ENCODE measurements at regions of chr3 and their contacts with region 1.

Region 1: DNA sequence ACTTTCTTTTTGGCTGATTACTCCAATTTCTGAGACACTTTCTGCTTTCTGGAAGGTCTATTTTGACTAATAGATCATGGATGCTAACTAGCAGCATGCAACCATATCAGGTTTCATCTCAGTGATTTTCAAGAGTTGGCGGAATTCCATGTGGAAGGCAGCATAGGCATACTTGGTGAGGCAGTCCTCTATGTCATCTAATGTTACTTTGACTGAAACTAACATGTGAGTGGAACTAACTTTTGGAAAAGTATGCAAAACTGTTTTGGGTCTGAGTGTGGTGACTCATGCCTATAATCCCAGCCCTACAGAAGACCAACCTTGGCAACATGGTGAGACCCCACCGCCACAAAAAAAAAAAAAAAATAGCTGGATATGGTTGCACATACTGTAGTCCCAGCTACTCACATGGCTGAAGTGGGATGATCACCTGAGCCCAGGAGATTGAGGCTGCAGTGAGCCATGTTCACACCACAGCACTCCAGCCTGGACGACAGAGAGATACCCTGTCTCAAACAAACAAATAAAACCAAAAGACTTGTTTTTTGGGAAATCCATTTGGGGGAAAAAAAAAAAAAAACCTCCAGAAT is 1033.7 kb downstream of the ROBO1 start:
- DNase-seq: no peak
- ATAC-seq: no peak
- H3K4me3 ChIP-seq: no peak overlapping the region
- H3K27ac ChIP-seq: no peak overlapping the region
- H3K4me1 ChIP-seq: 0 out of 2 replicates have a peak, but pooled peaks cover under 1% of the 10 kb centered on the region
- H3K27me3 ChIP-seq: no peaks in the 10 kb centered on the region
- CTCF ChIP-seq: no peak
- EP300 ChIP-seq: no peak
- POLR2A ChIP-seq: no peak
- RAD21 ChIP-seq: no peak

Region 2: GRCh38 chr3:78765671-78766485 is 31.7 kb after region 1 on chr3:
- CTCF ChIA-PET with region 1: no interaction called
- POLR2A ChIA-PET with region 1: no interaction called
- in situ Hi-C with region 1: no loop called
- intact Hi-C with region 1: no loop called
- DNase-seq: no peak
- ATAC-seq: no peak
- H3K4me3 ChIP-seq: no peak overlapping the region
- H3K27ac ChIP-seq: no peak overlapping the region
- H3K4me1 ChIP-seq: 0 out of 2 replicates have a peak, but pooled peaks cover 12% of the 10 kb centered on the region
- H3K27me3 ChIP-seq: no peaks in the 10 kb centered on the region
- CTCF ChIP-seq: no peak
- EP300 ChIP-seq: no peak
- POLR2A ChIP-seq: no peak
- RAD21 ChIP-seq: no peak

Region 3: DNA sequence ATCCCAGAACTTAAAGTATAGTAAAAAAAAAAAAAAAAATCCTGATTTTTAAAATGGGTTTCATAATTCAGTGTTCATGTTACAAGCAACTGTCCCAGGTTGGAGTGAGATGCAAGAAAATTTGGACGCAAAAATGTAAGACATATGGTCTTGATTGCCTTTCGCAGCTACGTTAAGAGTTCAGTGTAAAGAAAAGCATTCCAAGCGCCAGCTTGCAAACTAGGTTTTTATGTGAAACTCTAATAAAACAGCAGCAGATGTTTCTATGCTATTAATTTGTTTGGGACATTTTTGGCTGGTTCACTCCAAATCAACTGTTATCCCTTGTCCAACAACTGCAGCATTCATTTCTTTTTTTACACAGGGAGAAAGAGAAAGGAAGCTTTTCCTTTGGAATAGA is 75.8 kb after region 1 on chr3:
- CTCF ChIA-PET with region 1: no interaction called
- POLR2A ChIA-PET with region 1: no interaction called
- in situ Hi-C with region 1: no loop called
- intact Hi-C with region 1: no loop called
- DNase-seq: no peak
- ATAC-seq: no peak
- H3K4me3 ChIP-seq: no peak overlapping the region
- H3K27ac ChIP-seq: no peak overlapping the region
- H3K4me1 ChIP-seq: peaks cover 11% of the 10 kb centered on the region
- H3K27me3 ChIP-seq: no peaks in the 10 kb centered on the region
- CTCF ChIP-seq: no peak
- EP300 ChIP-seq: no peak
- POLR2A ChIP-seq: no peak
- RAD21 ChIP-seq: no peak

Region 4: GRCh38 chr3:78994174-78995027 is 260.3 kb after region 1 on chr3:
- CTCF ChIA-PET with region 1: no interaction called
- POLR2A ChIA-PET with region 1: no interaction called
- in situ Hi-C with region 1: no loop called
- intact Hi-C with region 1: loop called (anchors 10 kb)
- DNase-seq: peak; percentile 66
- ATAC-seq: peak; percentile 81
- H3K4me3 ChIP-seq: peak overlapping the region; percentile 22 to 42 (median 29); a peak in 5 of 6 replicates
- H3K27ac ChIP-seq: peak overlapping the region; percentile 82
- H3K4me1 ChIP-seq: peaks cover 78% of the 10 kb centered on the region
- H3K27me3 ChIP-seq: no peaks in the 10 kb centered on the region
- CTCF ChIP-seq: no peak
- EP300 ChIP-seq: peak in 1 of 2 experiments; percentile 75; a peak in 2 of 4 replicates
- POLR2A ChIP-seq: no peak
- RAD21 ChIP-seq: no peak

Measured in HepG2 (cell line).